Activated T-helper 1 cell treated with anti-CD3 and anti-CD28 coated beads, Interleukin-12 subunit alpha, Interleukin-12 subunit beta, Interleukin-2, Interleukin-4 antibody, amounts not matched to agents 30 ng/mL and 10 ng/mL and 1 ng/mL, durations not matched to agents 14 hours and 24 hours and 36 hours (primary cell): ENCODE measurements at regions of chr1 and their contacts with region 1.

Region 1: DNA sequence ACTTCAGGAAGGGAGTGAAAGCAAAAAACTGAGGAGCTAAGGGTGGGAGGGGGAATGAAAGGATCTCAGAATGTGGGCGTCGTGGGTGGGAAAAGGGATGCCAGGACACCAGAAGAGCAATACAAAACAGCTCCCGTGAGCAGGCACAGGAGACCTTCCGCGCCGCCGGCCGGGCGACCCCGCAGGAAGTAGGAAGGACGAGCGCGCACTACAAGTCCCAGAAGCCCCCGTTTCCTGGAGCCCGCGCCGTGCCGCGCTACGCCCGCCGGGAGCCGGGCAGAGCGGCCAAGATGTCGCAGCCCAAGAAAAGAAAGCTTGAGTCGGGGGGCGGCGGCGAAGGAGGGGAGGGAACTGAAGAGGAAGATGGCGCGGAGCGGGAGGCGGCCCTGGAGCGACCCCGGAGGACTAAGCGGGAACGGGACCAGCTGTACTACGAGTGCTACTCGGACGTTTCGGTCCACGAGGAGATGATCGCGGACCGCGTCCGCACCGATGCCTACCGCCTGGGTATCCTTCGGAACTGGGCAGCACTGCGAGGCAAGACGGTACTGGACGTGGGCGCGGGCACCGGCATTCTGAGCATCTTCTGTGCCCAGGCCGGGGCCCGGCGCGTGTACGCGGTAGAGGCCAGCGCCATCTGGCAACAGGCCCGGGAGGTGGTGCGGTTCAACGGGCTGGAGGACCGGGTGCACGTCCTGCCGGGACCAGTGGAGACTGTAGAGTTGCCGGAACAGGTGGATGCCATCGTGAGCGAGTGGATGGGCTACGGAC is at the start of gene PRMT6:
- DNase-seq: peak; percentile 80
- H3K4me3 Mint-ChIP-seq: peak within 1 kb of the TSS; percentile 98
- H3K27ac Mint-ChIP-seq: peak within 1 kb of the TSS; percentile 98
- H3K4me1 Mint-ChIP-seq: peaks cover 29% of the 10 kb centered on the region
- H3K27me3 Mint-ChIP-seq: no peaks in the 10 kb centered on the region
- total RNA-seq, gene PRMT6: 27.3 and 28.2 TPM in 2 replicates

Region 2: DNA sequence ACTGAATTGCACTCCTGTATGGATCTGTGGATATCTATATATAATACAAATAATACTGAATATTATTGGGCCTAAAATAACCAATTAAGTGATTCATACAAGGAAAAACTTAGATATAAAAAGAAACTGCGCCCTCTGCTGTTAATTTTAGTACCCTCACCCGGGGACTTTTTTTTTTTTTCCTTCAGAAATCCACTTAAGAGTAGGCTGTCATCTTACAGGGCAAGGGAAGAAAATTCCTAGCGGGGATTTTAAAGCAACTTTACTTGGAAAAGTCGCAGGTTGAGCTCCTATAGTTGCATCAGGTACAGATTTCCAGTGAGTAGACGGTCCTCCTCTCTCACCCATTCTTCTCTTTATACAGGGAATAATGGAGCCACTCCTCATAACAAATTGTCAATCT is 85.5 kb after region 1 on chr1:
- intact Hi-C with region 1: loop called (anchors 5 kb)
- DNase-seq: no peak
- H3K4me3 Mint-ChIP-seq: peak overlapping the region; percentile 69
- H3K27ac Mint-ChIP-seq: no peak overlapping the region
- H3K4me1 Mint-ChIP-seq: peaks cover 11% of the 10 kb centered on the region
- H3K27me3 Mint-ChIP-seq: peaks cover 56% of the 10 kb centered on the region